Caco-2 (cell line): ENCODE measurements at regions of chr1 and their contacts with region 1.

Region 1: DNA sequence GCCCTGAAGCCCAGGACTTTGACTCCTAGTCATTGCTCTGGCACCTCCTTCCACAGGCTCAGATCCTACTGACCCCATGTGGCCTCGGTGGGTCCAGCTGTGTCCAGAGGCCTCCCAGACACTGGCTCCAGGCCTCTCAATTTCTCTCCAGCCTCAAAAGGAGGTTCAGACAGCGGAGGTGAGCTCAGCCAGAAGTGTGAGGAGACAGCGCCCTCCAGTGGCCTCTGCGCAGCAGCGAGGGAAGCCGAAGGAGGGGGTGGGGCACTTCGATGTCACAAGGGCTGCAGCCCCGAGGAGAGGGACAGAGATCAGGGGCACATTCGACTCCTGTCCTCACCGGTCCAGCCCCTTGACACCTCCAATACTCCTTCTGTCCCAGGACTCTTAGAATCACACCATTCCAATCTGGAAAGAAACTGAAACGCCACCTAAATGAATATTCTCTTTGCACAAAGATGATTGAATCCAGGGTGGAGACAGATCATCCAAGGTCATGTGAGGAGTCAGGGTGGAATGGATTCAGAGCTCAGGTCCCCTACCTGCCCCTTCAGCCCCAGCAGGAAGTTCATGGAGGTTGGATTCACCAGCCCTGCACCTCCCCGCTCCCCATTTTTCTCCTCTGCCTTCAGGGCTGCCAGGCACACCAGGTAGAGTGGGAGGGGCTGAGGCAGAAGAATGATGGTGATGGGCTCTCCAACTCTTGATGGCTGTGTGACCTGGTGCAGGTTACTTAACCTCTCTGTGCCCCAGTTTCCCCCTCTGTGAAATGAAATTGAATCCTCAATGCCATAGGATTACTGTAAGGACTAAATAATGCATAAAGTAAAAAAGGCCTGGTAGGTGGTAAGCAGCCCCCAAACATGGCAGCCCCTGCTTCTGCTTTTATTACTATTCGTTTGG is 34.8 kb upstream of the ZBTB40 start:
- DNase-seq: peak; percentile 84 to 90
- H3K4me3 ChIP-seq: no peak overlapping the region
- H3K4me3 Mint-ChIP-seq: peak overlapping the region; percentile 50
- H3K27ac Mint-ChIP-seq: no peak overlapping the region
- H3K4me1 ChIP-seq: peaks cover 52% of the 10 kb centered on the region
- H3K4me1 Mint-ChIP-seq: peaks cover 32% of the 10 kb centered on the region
- H3K27me3 ChIP-seq: no peaks in the 10 kb centered on the region
- H3K27me3 Mint-ChIP-seq: no peaks in the 10 kb centered on the region
- CTCF ChIP-seq: peak; percentile 92 to 94

Region 2: GRCh38 chr1:22131875-22132486 is 284.8 kb before region 1 on chr1:
- CTCF ChIA-PET with region 1: interaction called, 6 read pairs
- POLR2A ChIA-PET with region 1: no interaction called
- intact Hi-C with region 1: loop called (anchors 1 kb)
- DNase-seq: peak; percentile 67 to 78
- H3K4me3 ChIP-seq: no peak overlapping the region
- H3K4me3 Mint-ChIP-seq: no peak overlapping the region
- H3K27ac Mint-ChIP-seq: no peak overlapping the region
- H3K4me1 ChIP-seq: no peaks in the 10 kb centered on the region
- H3K4me1 Mint-ChIP-seq: no peaks in the 10 kb centered on the region
- H3K27me3 ChIP-seq: no peaks in the 10 kb centered on the region
- H3K27me3 Mint-ChIP-seq: no peaks in the 10 kb centered on the region
- CTCF ChIP-seq: peak; percentile 88 to 90

Region 3: GRCh38 chr1:22275721-22276395 is 140.9 kb before region 1 on chr1:
- CTCF ChIA-PET with region 1: no interaction called
- POLR2A ChIA-PET with region 1: no interaction called
- intact Hi-C with region 1: loop called (anchors 5 kb)
- DNase-seq: peak; percentile 68 to 79
- H3K4me3 ChIP-seq: no peak overlapping the region
- H3K4me3 Mint-ChIP-seq: no peak overlapping the region
- H3K27ac Mint-ChIP-seq: no peak overlapping the region
- H3K4me1 ChIP-seq: peaks cover 15% of the 10 kb centered on the region
- H3K4me1 Mint-ChIP-seq: peaks cover 13% of the 10 kb centered on the region
- H3K27me3 ChIP-seq: no peaks in the 10 kb centered on the region
- H3K27me3 Mint-ChIP-seq: no peaks in the 10 kb centered on the region
- CTCF ChIP-seq: peak; percentile 85 to 90

Region 4: DNA sequence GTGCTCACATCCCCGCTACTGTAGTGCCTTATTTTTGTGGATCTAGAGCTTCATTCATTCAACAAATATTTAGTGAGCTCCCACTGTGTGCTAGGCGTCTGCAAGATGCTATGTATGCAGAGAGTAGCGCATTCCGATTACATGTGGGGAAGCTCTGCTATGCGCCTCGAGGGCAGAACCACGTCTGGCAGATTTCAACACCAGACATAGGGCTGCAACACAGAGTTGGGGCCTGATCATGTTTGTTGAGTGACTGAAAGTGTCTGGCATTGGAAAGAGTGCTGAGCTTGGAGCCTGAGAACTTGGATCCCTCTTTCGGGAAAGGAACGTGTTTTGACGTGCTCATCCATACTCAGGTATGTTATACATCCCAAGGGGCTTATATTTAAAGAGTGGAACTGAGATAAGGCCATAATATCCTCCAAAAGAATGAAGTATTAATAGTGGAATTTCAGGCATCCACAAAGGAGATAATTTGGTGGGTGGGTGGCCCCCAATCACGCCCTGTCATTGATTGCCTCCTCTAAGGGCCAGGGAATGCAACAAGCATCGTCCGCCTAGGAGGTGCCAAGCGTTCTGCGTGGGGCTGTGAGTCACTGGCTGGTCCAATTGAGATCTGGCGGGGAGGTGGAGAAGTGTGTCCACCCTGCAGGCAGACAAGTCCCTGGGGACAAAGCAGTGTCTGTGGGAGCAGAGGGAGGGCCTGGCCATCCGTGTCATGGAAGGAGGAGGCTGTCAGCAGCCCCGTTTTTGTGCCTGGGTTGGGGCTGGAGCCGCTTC is 27.9 kb before region 1 on chr1:
- CTCF ChIA-PET with region 1: interaction called, 5 read pairs
- POLR2A ChIA-PET with region 1: interaction called, 3 read pairs
- intact Hi-C with region 1: loop called (anchors 1 kb)
- DNase-seq: peak; percentile 66 to 73
- H3K4me3 ChIP-seq: no peak overlapping the region
- H3K4me3 Mint-ChIP-seq: no peak overlapping the region
- H3K27ac Mint-ChIP-seq: no peak overlapping the region
- H3K4me1 ChIP-seq: peaks cover 11% of the 10 kb centered on the region
- H3K4me1 Mint-ChIP-seq: peaks cover 20% of the 10 kb centered on the region
- H3K27me3 ChIP-seq: no peaks in the 10 kb centered on the region
- H3K27me3 Mint-ChIP-seq: no peaks in the 10 kb centered on the region
- CTCF ChIP-seq: no peak

Region 5: GRCh38 chr1:22471078-22471477 is 54.3 kb after region 1 on chr1:
- CTCF ChIA-PET with region 1: no interaction called
- POLR2A ChIA-PET with region 1: no interaction called
- intact Hi-C with region 1: no loop called
- DNase-seq: no peak
- H3K4me3 ChIP-seq: no peak overlapping the region
- H3K4me3 Mint-ChIP-seq: no peak overlapping the region
- H3K27ac Mint-ChIP-seq: no peak overlapping the region
- H3K4me1 ChIP-seq: no peaks in the 10 kb centered on the region
- H3K4me1 Mint-ChIP-seq: no peaks in the 10 kb centered on the region
- H3K27me3 ChIP-seq: no peaks in the 10 kb centered on the region
- H3K27me3 Mint-ChIP-seq: no peaks in the 10 kb centered on the region
- CTCF ChIP-seq: no peak

Region 6: GRCh38 chr1:22641906-22642636 is 225.3 kb after region 1 on chr1:
- CTCF ChIA-PET with region 1: interaction called, 12 read pairs
- POLR2A ChIA-PET with region 1: no interaction called
- intact Hi-C with region 1: loop called (anchors 1 kb)
- DNase-seq: peak; percentile 71 to 84
- H3K4me3 ChIP-seq: no peak overlapping the region
- H3K4me3 Mint-ChIP-seq: no peak overlapping the region
- H3K27ac Mint-ChIP-seq: no peak overlapping the region
- H3K4me1 ChIP-seq: no peaks in the 10 kb centered on the region
- H3K4me1 Mint-ChIP-seq: no peaks in the 10 kb centered on the region
- H3K27me3 ChIP-seq: no peaks in the 10 kb centered on the region
- H3K27me3 Mint-ChIP-seq: peaks cover 6% of the 10 kb centered on the region
- CTCF ChIP-seq: peak; percentile 92 to 94